ENCODE measurements at regions of chr13 and their contacts with region 1.

Region 1: DNA sequence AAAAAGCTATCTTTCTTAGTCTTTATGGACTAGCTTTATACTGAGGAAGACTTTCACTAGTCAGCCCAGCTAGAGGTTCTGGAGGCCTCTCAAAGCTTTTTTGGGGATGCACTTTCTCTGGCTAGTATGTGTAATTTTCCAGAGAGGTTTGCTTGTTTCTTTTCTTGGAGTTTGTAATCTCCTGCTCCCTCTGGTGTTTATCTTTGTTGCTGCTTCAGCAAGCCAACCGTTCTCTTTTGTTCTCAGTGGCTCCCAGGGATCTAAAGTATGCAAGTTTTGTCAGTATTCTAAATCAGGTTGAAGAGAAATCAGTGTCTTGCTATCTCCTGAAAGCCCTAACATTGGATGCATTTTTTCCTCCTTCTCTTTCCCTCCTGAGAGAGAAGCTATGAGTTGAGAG is 121.1 kb upstream of the MYO16 start:
- DNase-seq: peak; percentile 29
- ATAC-seq: peak; percentile 51; the same call in 1 of the 2 replicates
- H3K4me3 ChIP-seq: no peak overlapping the region
- H3K27ac ChIP-seq: no peak overlapping the region
- H3K4me1 ChIP-seq: no peaks in the 10 kb centered on the region
- H3K27me3 ChIP-seq: no peaks in the 10 kb centered on the region
- CTCF ChIP-seq: peak; percentile 51
- POLR2A ChIP-seq: no peak
- RAD21 ChIP-seq: peak; percentile 52

Region 2: DNA sequence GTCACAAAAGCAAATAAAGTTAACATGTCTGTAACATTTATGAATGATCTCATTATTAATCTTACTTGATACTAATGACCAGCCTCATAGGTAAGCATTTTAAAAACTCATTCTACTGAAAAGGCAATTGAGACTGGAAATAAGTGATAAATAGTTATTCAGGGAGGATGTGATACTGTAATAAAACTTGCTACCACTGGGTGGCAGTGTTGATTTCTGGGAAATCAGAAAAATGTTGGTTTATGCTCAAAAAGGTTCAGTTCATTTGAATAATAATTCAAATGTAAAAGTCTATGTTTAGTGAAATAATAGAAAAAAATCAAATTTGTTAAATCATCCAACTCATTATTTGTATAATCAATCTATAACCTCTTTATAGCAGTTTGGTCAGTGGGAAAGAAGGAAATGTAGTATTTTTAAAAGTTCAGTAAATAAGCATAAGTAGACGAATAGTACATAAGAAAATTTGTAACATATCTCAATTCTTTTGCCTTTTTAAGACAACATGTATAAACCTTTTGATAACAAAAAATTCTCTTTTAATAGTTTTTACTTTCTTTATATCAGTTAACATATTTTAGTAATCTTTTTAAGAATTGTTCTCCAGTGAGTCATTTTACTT is 280.5 kb before region 1 on chr13:
- CTCF ChIA-PET with region 1: no interaction called
- POLR2A ChIA-PET with region 1: no interaction called
- dilution Hi-C with region 1: no loop called
- in situ Hi-C with region 1: no loop called
- intact Hi-C with region 1: loop called (anchors 5 kb)
- DNase-seq: peak; percentile 52
- ATAC-seq: peak; percentile 75
- H3K4me3 ChIP-seq: no peak overlapping the region
- H3K27ac ChIP-seq: no peak overlapping the region
- H3K4me1 ChIP-seq: peaks cover 8% of the 10 kb centered on the region; the same call in 1 of the 2 replicates
- H3K27me3 ChIP-seq: no peaks in the 10 kb centered on the region
- CTCF ChIP-seq: peak; percentile 74
- POLR2A ChIP-seq: no peak
- RAD21 ChIP-seq: peak; percentile 54

Region 3: GRCh38 chr13:108322206-108322824 is 185.9 kb before region 1 on chr13:
- CTCF ChIA-PET with region 1: interaction called, 4 read pairs
- POLR2A ChIA-PET with region 1: no interaction called
- dilution Hi-C with region 1: no loop called
- in situ Hi-C with region 1: loop called (anchors 10 kb)
- intact Hi-C with region 1: loop called (anchors 5 kb)
- DNase-seq: peak; percentile 52
- ATAC-seq: peak; percentile 88
- H3K4me3 ChIP-seq: no peak overlapping the region
- H3K27ac ChIP-seq: no peak overlapping the region
- H3K4me1 ChIP-seq: no peaks in the 10 kb centered on the region
- H3K27me3 ChIP-seq: peaks cover 17% of the 10 kb centered on the region
- CTCF ChIP-seq: peak; percentile 82
- POLR2A ChIP-seq: no peak
- RAD21 ChIP-seq: peak; percentile 77

Region 4: DNA sequence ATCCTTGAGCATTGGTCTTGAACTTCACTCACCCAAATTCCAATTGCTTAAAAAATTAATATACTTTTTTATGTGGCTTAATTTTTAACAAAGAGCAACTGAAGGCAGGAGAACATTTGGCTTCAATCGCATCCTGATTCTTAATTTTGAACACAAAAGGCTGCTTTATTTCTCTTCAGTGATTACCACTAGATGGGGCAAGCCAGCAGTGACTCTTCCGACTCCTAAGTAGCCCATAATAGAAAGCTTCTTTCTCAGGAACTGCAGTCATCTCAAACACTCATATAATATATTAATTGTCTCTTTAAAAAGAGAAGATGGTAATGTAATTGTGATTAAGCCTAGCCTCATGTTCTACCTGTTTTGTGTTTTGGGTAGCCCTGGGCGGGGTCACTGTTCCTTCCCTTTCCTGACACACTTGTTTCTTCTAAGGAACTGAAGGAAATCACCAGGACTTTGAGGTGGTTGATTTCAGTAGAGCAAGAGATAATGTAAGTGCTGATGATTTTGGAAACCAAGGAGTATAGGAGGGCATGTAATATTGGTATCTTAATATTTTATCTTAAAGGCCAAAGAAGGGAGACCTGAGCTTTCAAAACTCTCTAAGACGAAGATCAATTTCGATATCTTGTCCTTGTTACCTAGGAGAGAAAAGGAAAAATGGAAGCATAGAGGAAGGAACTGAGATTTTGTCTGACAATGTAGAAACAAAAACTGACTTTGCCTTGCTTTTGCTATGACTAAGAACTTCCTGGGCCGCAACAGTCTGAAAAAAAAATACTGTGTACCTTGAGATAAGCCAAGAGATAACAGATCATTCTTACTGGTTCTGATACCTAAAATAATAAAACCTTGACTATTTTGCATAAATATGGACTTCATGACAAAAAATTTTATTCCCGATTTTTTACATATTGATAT is 165.6 kb before region 1 on chr13:
- CTCF ChIA-PET with region 1: interaction called, 10 read pairs
- POLR2A ChIA-PET with region 1: interaction called, 3 read pairs
- dilution Hi-C with region 1: no loop called
- in situ Hi-C with region 1: no loop called
- intact Hi-C with region 1: loop called (anchors 5 kb)
- DNase-seq: peak; percentile 35
- ATAC-seq: peak; percentile 51; the same call in 1 of the 2 replicates
- H3K4me3 ChIP-seq: no peak overlapping the region
- H3K27ac ChIP-seq: no peak overlapping the region
- H3K4me1 ChIP-seq: no peaks in the 10 kb centered on the region
- H3K27me3 ChIP-seq: peaks cover 10% of the 10 kb centered on the region
- CTCF ChIP-seq: peak; percentile 53
- POLR2A ChIP-seq: no peak
- RAD21 ChIP-seq: peak; percentile 50